HepG2 (cell line): ENCODE measurements at regions of chr19 and their contacts with region 1.

Region 1: GRCh38 chr19:48363810-48364563 is at the starts of genes SYNGR4 and TMEM143:
- DNase-seq: peak; percentile 99
- ATAC-seq: peak; percentile 84
- H3K4me3 ChIP-seq: peak within 1 kb of the TSS; percentile 47 to 86 (median 71)
- H3K27ac ChIP-seq: peak within 1 kb of the TSS; percentile 96
- H3K4me1 ChIP-seq: peaks cover 46% of the 10 kb centered on the region
- H3K27me3 ChIP-seq: no peaks in the 10 kb centered on the region
- CTCF ChIP-seq: no peak
- EP300 ChIP-seq: peak in 1 of 2 experiments; percentile 21; a peak in 1 of 4 replicates
- POLR2A ChIP-seq: peak; percentile 64 to 80
- RAD21 ChIP-seq: no peak
- total RNA-seq, gene SYNGR4: not detected in 2 replicates
- total RNA-seq, gene TMEM143: 4.7 and 7.7 TPM in 2 replicates

Region 2: GRCh38 chr19:48290771-48291488 is 73.1 kb before region 1 on chr19:
- CTCF ChIA-PET with region 1: no interaction called
- POLR2A ChIA-PET with region 1: no interaction called
- in situ Hi-C with region 1: no loop called
- intact Hi-C with region 1: no loop called
- DNase-seq: no peak
- ATAC-seq: peak; percentile 76
- H3K4me3 ChIP-seq: peak overlapping the region; percentile 42 to 76 (median 54)
- H3K27ac ChIP-seq: no peak overlapping the region
- H3K4me1 ChIP-seq: peaks cover 20% of the 10 kb centered on the region
- H3K27me3 ChIP-seq: no peaks in the 10 kb centered on the region
- CTCF ChIP-seq: peak; percentile 90
- EP300 ChIP-seq: no peak
- POLR2A ChIP-seq: no peak
- RAD21 ChIP-seq: peak; percentile 73

Region 3: DNA sequence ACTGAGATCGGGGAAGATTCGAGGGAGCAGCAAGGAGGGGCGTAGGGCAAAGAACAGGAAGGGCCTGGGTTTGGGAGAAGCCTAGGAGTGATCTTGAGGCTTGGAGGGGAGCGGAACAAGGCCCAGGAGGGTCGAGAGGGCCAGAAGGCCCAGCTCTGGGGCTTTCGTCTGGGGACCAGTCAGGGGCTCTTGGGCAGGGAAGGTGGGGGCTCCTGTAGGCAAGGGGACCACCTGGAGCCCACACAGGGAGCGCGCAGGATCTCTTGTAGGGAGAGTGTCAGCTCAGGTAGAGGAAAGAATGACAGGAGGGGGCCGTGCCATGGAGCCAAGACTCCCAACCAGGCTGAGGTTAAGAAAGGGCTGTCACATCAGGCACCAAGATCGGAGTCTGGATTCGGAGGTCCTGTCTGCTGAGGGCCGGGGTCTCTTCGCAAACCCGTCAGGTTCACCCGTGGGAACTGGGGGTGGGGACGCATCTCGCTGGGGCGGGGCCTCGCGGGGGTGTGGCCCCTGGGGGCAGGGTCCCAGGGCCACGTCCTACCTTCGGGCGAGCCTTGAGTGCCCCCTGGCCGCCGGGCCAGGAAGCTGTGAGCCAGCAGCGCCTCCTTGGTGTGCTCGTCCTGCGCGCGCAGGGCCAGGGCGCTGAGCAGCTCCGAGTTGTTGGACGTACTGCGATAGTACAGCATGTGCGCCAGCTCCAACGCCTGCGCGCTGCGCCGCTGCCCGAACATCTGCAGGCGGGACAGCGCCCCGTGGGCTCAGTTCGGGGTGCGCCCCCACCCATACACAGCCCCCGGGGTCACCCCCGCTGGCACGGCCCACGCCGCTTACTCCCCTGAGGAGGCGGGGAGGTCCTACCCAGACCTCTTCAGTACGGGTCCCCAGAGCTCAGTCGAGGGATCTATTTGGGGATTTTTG is 30.3 kb before region 1 on chr19:
- CTCF ChIA-PET with region 1: no interaction called
- POLR2A ChIA-PET with region 1: interaction called, 10 read pairs
- in situ Hi-C with region 1: no loop called
- intact Hi-C with region 1: no loop called
- DNase-seq: no peak
- ATAC-seq: peak; percentile 8; the same call in 2 of the 3 replicates
- H3K4me3 ChIP-seq: peak overlapping the region; percentile 52 to 76 (median 56)
- H3K27ac ChIP-seq: peak overlapping the region; percentile 59
- H3K4me1 ChIP-seq: peaks cover 17% of the 10 kb centered on the region
- H3K27me3 ChIP-seq: no peaks in the 10 kb centered on the region
- CTCF ChIP-seq: no peak
- EP300 ChIP-seq: no peak
- POLR2A ChIP-seq: no peak
- RAD21 ChIP-seq: no peak

Region 4: GRCh38 chr19:48391107-48391986 is 27.4 kb after region 1 on chr19 and contains the start of gene KDELR1:
- CTCF ChIA-PET with region 1: no interaction called
- POLR2A ChIA-PET with region 1: interaction called, 44 read pairs
- in situ Hi-C with region 1: no loop called
- intact Hi-C with region 1: no loop called
- DNase-seq: peak; percentile 42
- ATAC-seq: peak; percentile 67
- H3K4me3 ChIP-seq: peak within 1 kb of the TSS; percentile 93 to 99 (median 99)
- H3K27ac ChIP-seq: peak within 1 kb of the TSS; percentile 83
- H3K4me1 ChIP-seq: peaks cover 72% of the 10 kb centered on the region
- H3K27me3 ChIP-seq: peaks cover 10 to 34% of the 10 kb centered on the region in 2 experiments; a peak in 4 of 5 replicates
- CTCF ChIP-seq: peak; percentile 89
- EP300 ChIP-seq: no peak
- POLR2A ChIP-seq: peak in 1 of 2 experiments; percentile 73; a peak in 3 of 4 replicates
- RAD21 ChIP-seq: 0 out of 2 replicates have a peak, but pooled peaks have one; percentile 28
- total RNA-seq, gene KDELR1: 70.8 and 134 TPM in 2 replicates

Region 5: DNA sequence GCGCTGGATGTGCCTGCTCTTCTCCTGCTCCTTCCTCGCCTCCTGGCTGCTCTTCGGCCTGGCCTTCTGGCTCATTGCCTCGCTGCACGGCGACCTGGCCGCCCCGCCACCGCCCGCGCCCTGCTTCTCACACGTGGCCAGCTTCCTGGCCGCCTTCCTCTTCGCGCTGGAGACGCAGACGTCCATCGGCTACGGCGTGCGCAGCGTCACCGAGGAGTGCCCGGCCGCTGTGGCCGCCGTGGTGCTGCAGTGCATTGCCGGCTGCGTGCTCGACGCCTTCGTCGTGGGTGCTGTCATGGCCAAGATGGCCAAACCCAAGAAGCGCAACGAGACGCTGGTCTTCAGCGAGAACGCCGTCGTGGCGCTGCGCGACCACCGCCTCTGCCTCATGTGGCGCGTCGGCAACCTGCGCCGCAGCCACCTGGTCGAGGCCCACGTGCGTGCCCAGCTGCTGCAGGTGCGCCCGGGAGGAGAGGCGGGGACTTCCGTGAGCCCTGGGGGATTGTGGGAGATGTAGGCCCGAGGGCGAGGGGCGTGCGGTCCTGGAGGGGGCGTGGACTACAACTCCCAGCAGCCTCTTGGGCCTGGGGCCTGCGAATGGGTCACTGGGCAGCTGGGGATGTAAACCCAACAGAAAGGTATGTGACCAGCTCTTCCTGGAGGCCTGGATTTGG is 98.1 kb after region 1 on chr19:
- CTCF ChIA-PET with region 1: no interaction called
- POLR2A ChIA-PET with region 1: no interaction called
- in situ Hi-C with region 1: no loop called
- intact Hi-C with region 1: no loop called
- DNase-seq: no peak
- ATAC-seq: no peak; the same call in 2 of the 3 replicates
- H3K4me3 ChIP-seq: no peak overlapping the region
- H3K27ac ChIP-seq: no peak overlapping the region
- H3K4me1 ChIP-seq: no peaks in the 10 kb centered on the region
- H3K27me3 ChIP-seq: no peaks in the 10 kb centered on the region; a peak in 1 of 5 replicates
- CTCF ChIP-seq: no peak
- EP300 ChIP-seq: no peak
- POLR2A ChIP-seq: no peak
- RAD21 ChIP-seq: no peak